ENCODE measurements at regions of chr1 and their contacts with region 1.

Region 1: GRCh38 chr1:152926091-152926490 is 17.7 kb downstream of the IVL start:
- DNase-seq: peak; percentile 64
- H3K4me3 ChIP-seq: no peak overlapping the region
- H3K27ac ChIP-seq: no peak overlapping the region
- H3K4me1 ChIP-seq: peaks cover 12% of the 10 kb centered on the region
- H3K27me3 ChIP-seq: no peaks in the 10 kb centered on the region
- CTCF ChIP-seq: peak; percentile 84 to 89

Region 2: DNA sequence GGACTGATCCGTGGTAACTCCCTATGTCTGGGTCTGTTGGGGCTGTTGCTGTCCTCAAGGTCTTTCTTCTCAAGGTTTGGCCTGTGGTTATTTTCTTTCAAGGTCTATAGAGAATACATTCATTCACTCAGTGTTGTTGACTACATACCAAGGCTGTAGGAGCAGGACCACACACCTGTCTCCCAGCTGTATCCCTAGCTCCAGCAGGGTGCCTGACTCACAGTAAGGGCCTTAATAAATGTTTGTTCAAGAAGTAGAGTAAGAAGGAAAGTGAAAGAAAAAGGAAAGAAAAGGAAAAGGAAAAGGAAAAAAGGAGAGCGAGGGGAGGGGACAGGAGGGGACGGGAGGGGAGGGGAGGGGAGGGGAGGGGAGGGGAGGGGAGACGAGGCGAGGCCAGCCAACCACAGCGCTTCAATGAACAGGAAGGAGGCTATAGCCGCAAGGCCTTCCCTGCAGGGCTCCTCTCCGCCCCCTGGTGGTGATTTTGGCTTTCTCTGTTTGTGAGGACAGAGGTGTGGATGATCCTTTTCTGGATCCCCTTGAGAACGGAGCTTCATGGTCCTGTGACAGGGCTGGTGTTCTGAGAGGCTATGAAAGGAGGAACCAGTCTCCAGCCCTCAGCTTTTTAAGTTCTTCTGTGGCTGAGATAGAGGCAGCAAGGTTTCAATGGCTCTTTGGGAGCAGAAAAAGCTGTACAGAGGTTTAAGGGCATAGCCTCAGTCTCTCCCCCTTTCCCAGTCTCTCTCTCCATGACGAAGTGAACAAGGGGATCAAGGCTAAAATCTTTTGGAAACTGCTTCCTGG is 446.1 kb before region 1 on chr1:
- CTCF ChIA-PET with region 1: no interaction called
- dilution Hi-C with region 1: no loop called
- in situ Hi-C with region 1: no loop called
- intact Hi-C with region 1: no loop called
- DNase-seq: no peak
- H3K4me3 ChIP-seq: no peak overlapping the region
- H3K27ac ChIP-seq: no peak overlapping the region
- H3K4me1 ChIP-seq: no peaks in the 10 kb centered on the region
- H3K27me3 ChIP-seq: no peaks in the 10 kb centered on the region
- CTCF ChIP-seq: peak; percentile 57 to 60

Region 3: GRCh38 chr1:152745289-152745704 is 180.8 kb before region 1 on chr1:
- CTCF ChIA-PET with region 1: no interaction called
- dilution Hi-C with region 1: no loop called
- in situ Hi-C with region 1: no loop called
- intact Hi-C with region 1: loop called (anchors 1 kb)
- DNase-seq: peak; percentile 44
- H3K4me3 ChIP-seq: no peak overlapping the region
- H3K27ac ChIP-seq: no peak overlapping the region
- H3K4me1 ChIP-seq: peaks cover 58% of the 10 kb centered on the region
- H3K27me3 ChIP-seq: no peaks in the 10 kb centered on the region
- CTCF ChIP-seq: peak; percentile 14 to 35

Region 4: GRCh38 chr1:152768847-152769533 is 157.1 kb before region 1 on chr1:
- CTCF ChIA-PET with region 1: interaction called, 3 read pairs
- dilution Hi-C with region 1: no loop called
- in situ Hi-C with region 1: no loop called
- intact Hi-C with region 1: loop called (anchors 2 kb)
- DNase-seq: peak; percentile 59
- H3K4me3 ChIP-seq: no peak overlapping the region
- H3K27ac ChIP-seq: peak overlapping the region; percentile 57
- H3K4me1 ChIP-seq: peaks cover 28% of the 10 kb centered on the region
- H3K27me3 ChIP-seq: no peaks in the 10 kb centered on the region
- CTCF ChIP-seq: peak; percentile 14 to 30

Region 5: DNA sequence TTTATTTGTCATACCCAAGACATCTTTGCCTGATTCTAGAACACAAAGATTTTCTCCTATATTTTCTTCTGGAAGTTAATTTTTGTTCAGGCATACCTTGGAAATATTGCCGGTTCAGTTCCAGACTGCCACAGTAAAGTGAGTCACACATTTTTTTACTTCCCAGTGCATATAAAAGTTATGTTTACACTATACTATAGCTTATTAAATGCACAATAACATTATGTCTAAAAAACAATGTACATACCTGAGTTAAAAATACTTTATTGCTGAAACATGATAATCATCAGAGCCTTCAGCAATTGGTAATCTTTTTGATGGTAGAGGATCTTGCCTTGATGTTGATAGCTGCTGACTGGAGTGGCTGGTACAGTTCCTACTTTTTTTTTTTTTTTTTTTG is 38.0 kb before region 1 on chr1:
- CTCF ChIA-PET with region 1: no interaction called
- dilution Hi-C with region 1: no loop called
- in situ Hi-C with region 1: no loop called
- intact Hi-C with region 1: no loop called
- DNase-seq: peak; percentile 37
- H3K4me3 ChIP-seq: no peak overlapping the region
- H3K27ac ChIP-seq: no peak overlapping the region
- H3K4me1 ChIP-seq: peaks cover 56% of the 10 kb centered on the region
- H3K27me3 ChIP-seq: no peaks in the 10 kb centered on the region
- CTCF ChIP-seq: no peak

Region 6: DNA sequence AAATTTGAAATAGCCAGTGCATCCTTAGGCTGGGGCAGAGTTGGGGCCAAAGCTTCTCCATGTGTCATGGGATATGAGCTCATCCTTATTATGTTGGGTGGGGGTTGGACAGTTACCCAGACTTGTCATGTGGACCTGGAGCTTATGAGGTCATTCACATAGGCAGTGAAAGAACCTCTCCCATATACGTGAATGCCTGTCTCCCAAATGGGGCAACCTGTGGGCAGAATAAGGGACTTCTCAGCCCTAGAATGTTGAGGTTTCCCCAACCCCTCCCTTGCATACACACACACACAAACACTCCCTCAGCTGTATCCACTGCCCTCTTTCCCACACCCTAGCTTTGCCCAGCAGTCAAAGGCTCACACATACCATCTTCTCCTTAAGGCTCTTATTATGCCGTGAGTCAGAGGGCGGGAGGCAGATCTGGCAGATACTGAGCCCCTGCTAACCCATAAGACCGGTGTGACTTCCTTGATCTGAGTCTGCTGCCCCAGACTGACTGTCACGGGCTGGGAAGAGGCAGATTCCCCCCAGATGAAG is 20.0 kb before region 1 on chr1:
- CTCF ChIA-PET with region 1: interaction called, 6 read pairs
- dilution Hi-C with region 1: no loop called
- in situ Hi-C with region 1: no loop called
- intact Hi-C with region 1: loop called (anchors 2 kb)
- DNase-seq: peak; percentile 100
- H3K4me3 ChIP-seq: peak overlapping the region in 1 of 3 experiments; percentile 0
- H3K27ac ChIP-seq: peak overlapping the region; percentile 90
- H3K4me1 ChIP-seq: peaks cover 58% of the 10 kb centered on the region
- H3K27me3 ChIP-seq: no peaks in the 10 kb centered on the region
- CTCF ChIP-seq: no peak

Region 7: GRCh38 chr1:152996633-152997400 is 70.7 kb after region 1 on chr1:
- CTCF ChIA-PET with region 1: no interaction called
- dilution Hi-C with region 1: no loop called
- in situ Hi-C with region 1: no loop called
- intact Hi-C with region 1: no loop called
- DNase-seq: no peak
- H3K4me3 ChIP-seq: no peak overlapping the region
- H3K27ac ChIP-seq: no peak overlapping the region
- H3K4me1 ChIP-seq: peaks cover 9% of the 10 kb centered on the region
- H3K27me3 ChIP-seq: no peaks in the 10 kb centered on the region
- CTCF ChIP-seq: no peak